OCI-LY7 (cell line): ENCODE measurements at regions of chr3 and their contacts with region 1.

Region 1: DNA sequence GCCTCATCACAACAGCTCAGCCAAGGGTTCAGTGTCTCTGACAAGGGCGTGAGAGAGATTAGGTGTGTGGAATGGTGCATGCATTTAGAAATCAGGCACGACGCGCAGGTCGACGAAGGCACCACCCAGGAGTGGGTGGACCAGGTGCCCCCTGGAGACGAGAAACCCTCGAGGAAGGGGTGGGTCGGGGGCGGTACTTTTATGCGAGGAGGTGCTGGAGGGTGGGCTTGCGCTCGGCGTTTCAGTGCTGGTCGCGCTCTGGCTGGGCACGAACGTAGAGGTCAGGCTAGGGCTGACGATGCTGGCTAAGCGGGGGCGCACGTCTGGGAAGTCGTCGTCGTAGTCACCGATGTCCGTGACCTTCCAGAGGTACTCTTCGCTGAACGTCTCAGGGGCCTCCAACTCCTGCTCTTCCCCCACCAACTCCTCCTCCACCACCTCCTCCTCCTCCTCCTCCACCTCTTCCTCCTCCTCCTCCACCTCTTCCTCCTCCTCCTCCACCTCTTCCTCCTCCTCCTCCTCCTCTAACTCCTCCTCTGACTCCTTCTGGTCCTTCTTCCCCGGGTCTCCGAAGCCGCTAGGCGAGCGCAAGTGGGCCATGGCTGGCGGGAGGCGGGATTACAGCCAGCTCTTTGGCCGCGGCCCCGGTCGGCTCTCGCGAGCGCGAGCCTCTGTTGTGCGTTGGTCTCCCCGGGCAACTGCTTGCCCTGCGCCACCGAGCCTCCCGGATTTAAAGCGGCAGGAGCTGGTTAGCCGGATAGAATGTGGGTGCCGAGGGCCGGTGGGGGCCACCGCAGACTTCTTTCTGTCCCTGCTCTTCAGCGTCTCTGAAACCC is at the start of gene ERICH6:
- DNase-seq: peak; percentile 90
- H3K4me3 ChIP-seq: peak within 1 kb of the TSS; percentile 73
- H3K27ac ChIP-seq: peak within 1 kb of the TSS; percentile 43
- H3K4me1 ChIP-seq: peaks cover 7% of the 10 kb centered on the region
- CTCF ChIP-seq: 0 out of 2 replicates have a peak, but pooled peaks have one; percentile 25
- total RNA-seq, gene ERICH6: 0.41 TPM in 1 of 2 replicates, not detected in the other

Region 2: GRCh38 chr3:150528354-150528797 is 175.1 kb before region 1 on chr3:
- CTCF ChIA-PET with region 1: no interaction called
- POLR2A ChIA-PET with region 1: no interaction called
- intact Hi-C with region 1: loop called (anchors 5 kb)
- DNase-seq: peak; percentile 38
- H3K4me3 ChIP-seq: no peak overlapping the region
- H3K27ac ChIP-seq: no peak overlapping the region
- H3K4me1 ChIP-seq: no peaks in the 10 kb centered on the region
- CTCF ChIP-seq: peak; percentile 80

Region 3: GRCh38 chr3:150546226-150547044 is 157.1 kb before region 1 on chr3 and contains the starts of genes EIF2A and SERP1:
- CTCF ChIA-PET with region 1: no interaction called
- POLR2A ChIA-PET with region 1: interaction called, 5 read pairs
- intact Hi-C with region 1: loop called (anchors 5 kb)
- DNase-seq: peak; percentile 99
- H3K4me3 ChIP-seq: peak within 1 kb of the TSS; percentile 98
- H3K27ac ChIP-seq: peak within 1 kb of the TSS; percentile 81
- H3K4me1 ChIP-seq: peaks cover 40% of the 10 kb centered on the region
- CTCF ChIP-seq: no peak
- total RNA-seq, gene EIF2A: 85.6 and 86.0 TPM in 2 replicates
- total RNA-seq, gene SERP1: 182 and 183 TPM in 2 replicates

Region 4: DNA sequence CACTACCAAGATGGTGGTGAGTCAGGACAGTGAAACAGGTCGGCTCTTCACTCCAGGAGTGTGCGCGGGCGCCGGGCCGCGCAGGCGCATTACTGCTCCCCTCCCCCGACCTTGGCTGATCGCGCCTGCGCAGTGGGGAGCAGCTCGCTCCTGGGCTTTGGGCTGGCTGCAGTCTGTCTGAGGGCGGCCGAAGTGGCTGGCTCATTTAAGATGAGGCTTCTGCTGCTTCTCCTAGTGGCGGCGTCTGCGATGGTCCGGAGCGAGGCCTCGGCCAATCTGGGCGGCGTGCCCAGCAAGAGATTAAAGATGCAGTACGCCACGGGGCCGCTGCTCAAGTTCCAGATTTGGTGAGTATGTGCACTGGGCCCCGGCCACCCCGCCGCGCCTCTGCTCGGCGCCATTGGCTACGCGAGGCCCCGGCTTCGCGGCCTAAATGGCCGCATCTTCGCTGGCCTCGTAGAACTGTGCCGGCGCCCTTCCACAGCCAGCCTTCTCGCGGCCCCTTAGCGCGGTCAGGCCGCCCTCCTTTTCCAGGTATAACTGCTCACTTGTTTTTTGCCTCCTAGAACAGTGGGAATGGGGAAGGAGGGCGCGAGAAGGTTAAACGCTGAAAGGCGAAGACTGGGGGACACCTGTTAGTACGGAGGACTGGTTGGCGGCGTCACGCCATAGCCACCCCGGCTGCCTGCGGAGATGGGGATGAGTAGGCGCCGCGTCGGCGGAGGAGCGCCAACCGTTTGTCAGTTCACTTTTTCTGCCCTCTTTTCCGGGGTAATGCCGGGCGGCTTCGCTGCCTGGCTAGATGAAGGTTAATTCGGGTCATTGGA is 100.2 kb before region 1 on chr3 and contains the start of gene SELENOT:
- CTCF ChIA-PET with region 1: no interaction called
- POLR2A ChIA-PET with region 1: interaction called, 7 read pairs
- intact Hi-C with region 1: loop called (anchors 5 kb)
- DNase-seq: peak; percentile 95
- H3K4me3 ChIP-seq: peak within 1 kb of the TSS; percentile 88
- H3K27ac ChIP-seq: peak within 1 kb of the TSS; percentile 93
- H3K4me1 ChIP-seq: peaks cover 54% of the 10 kb centered on the region
- CTCF ChIP-seq: 0 out of 2 replicates have a peak, but pooled peaks have one; percentile 29
- total RNA-seq, gene SELENOT: 36.8 and 60.7 TPM in 2 replicates